RWPE1 (cell line): ENCODE measurements at regions of chrX and their contacts with region 1.

Region 1: DNA sequence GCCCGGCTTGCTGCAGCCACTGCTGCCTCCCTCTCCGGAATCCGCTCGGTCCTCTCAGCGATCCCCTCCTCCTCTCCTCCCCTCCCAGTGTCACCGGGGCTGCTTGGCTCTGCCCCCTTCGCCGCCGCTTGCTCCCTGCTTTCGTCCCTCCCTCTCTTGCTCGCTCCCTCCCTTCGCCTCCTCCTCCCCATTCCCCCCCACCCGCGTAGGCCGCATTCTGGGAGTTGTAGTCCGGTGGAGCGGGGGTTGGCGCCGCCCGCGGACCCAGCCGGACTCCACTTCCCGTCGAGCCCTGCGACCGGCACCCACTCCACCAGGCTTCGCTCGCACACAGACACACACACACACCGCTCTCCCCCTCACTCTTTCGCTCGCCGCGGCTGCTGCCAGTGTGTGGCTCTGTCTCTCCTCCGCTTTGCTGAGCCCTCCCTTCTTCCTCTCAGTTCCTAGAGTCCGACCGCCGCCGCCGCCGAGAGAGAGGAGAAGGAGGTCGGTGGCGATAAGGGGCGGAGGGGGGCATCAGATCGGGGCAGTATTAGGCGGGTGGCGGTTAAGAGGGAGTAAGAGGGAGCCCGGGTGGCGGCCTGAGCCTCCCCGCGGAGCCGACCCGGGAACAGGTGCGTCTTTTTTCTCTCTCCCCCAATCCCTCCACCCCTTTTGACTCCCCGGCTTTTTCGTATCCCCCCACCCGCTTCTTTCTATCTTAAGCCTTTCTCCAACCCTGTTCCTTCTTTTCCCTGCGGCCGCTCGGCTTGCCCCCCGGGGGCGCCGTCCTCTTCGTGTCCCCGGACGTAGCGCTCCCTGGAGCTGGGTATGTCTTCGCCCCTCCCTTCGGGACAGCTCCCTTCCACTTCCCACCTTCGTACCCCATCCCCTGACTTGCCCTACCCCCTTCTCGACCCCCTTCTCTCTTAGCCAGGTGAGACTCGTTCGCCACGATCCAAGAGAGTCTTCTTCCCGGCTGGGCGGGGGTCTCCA is at the start of gene BCORL1:
- DNase-seq: peak; percentile 92
- H3K27ac ChIP-seq: peak within 1 kb of the TSS; percentile 41; the same call in 1 of the 2 replicates
- CTCF ChIP-seq: no peak

Region 2: DNA sequence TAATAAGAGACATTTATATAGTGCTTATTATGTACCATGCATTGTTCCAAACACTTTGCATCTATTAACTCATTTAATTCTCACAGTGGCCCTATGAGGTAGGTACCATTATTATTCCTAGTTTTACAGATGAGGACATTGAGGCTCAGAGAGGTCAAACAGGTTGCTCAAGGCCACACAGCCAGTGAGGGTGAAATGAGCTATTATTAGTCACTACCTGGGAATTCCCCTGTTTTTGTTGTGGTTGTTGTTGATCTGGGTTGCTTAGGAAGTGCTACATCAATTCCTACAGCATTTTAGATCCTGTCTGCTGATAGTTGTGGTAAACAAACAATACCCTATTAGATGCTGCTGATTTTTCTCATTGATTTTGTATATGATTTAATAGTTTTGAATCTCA is 369.0 kb before region 1 on chrX:
- CTCF ChIA-PET with region 1: no interaction called
- POLR2A ChIA-PET with region 1: interaction called, 12 read pairs
- DNase-seq: no peak
- H3K27ac ChIP-seq: no peak overlapping the region
- CTCF ChIP-seq: no peak